ENCODE measurements at regions of chr7 and their contacts with region 1.

Region 1: DNA sequence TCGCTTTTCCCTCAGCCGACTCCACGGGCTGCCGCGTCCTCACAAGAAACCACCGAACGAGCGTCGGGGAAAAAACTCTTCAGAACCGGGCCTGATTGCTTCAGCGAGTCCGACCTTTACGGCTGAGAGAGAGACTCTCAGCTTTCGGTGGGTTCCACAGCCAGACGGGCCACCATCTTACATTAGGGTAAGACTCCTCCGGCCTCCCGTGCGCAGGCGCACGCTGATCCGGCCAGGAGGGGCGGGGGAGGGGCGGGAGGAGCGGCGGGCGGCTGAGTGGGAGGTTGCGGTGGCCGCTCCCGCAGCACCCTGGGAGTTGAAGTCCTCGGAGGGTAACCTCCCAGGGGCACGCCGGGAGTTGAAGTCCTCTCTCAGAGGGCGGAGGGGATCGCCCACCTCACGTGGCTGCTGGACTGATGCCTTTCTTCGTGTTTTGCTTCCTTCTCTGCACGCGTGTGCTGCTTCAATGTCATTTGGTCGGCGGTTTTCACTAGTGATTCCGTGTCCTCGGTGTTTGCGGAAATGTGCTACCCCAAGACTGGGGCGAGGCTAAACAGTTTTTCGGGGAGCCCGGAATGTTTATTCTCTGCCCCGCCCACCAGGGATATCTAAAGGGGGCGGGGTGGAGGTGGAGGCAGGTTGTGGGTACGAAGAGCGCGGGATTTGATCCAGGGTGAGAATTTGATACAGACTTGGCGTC is at the start of gene CNOT4:
- DNase-seq: peak; percentile 96 to 98 (median 97)
- ATAC-seq: peak; percentile 98 to 100 (median 99)
- H3K4me3 ChIP-seq: peak within 1 kb of the TSS; percentile 49 to 92 (median 77)
- H3K27ac ChIP-seq: peak within 1 kb of the TSS; percentile 35 to 97 (median 92)
- H3K4me1 ChIP-seq: peaks cover 6 to 40% (median 25%) of the 10 kb centered on the region in 12 donors
- H3K27me3 ChIP-seq: no peaks in the 10 kb centered on the region
- CTCF ChIP-seq: no peak
- POLR2A ChIP-seq: peak in 1 of 2 donors; percentile 57
- total RNA-seq, gene CNOT4: 21.2 to 29.2 (median 24.0) TPM

Region 2: GRCh38 chr7:134710859-134711624 is 799.0 kb before region 1 on chr7:
- intact Hi-C with region 1: no loop called
- DNase-seq: no peak
- ATAC-seq: no peak
- H3K4me3 ChIP-seq: no peak overlapping the region
- H3K27ac ChIP-seq: peak overlapping the region in 1 of 12 donors; percentile 26
- H3K4me1 ChIP-seq: peaks cover 0 to 5% (median 0%) of the 10 kb centered on the region in 12 donors
- H3K27me3 ChIP-seq: no peaks in the 10 kb centered on the region
- CTCF ChIP-seq: no peak
- POLR2A ChIP-seq: no peak

Region 3: GRCh38 chr7:134891262-134891695 is 618.8 kb before region 1 on chr7:
- intact Hi-C with region 1: no loop called
- DNase-seq: peak; percentile 88 to 92 (median 88)
- ATAC-seq: peak; percentile 88 to 93 (median 91)
- H3K4me3 ChIP-seq: peak overlapping the region; percentile 41 to 70 (median 60)
- H3K27ac ChIP-seq: peak overlapping the region; percentile 69 to 94 (median 84)
- H3K4me1 ChIP-seq: peaks cover 8 to 71% (median 46%) of the 10 kb centered on the region in 12 donors
- H3K27me3 ChIP-seq: no peaks in the 10 kb centered on the region
- CTCF ChIP-seq: no peak
- POLR2A ChIP-seq: peak in 1 of 2 donors; percentile 36

Region 4: GRCh38 chr7:135414850-135415439 is 95.1 kb before region 1 on chr7:
- intact Hi-C with region 1: loop called in 1 of 10 experiments (anchors 10 kb)
- DNase-seq: peak in 1 of 5 donors; percentile 22
- ATAC-seq: no peak
- H3K4me3 ChIP-seq: no peak overlapping the region
- H3K27ac ChIP-seq: no peak overlapping the region
- H3K4me1 ChIP-seq: no peaks in the 10 kb centered on the region
- H3K27me3 ChIP-seq: no peaks in the 10 kb centered on the region
- CTCF ChIP-seq: peak in 9 of 12 donors; percentile 10 to 46 (median 40)
- POLR2A ChIP-seq: no peak

Region 5: DNA sequence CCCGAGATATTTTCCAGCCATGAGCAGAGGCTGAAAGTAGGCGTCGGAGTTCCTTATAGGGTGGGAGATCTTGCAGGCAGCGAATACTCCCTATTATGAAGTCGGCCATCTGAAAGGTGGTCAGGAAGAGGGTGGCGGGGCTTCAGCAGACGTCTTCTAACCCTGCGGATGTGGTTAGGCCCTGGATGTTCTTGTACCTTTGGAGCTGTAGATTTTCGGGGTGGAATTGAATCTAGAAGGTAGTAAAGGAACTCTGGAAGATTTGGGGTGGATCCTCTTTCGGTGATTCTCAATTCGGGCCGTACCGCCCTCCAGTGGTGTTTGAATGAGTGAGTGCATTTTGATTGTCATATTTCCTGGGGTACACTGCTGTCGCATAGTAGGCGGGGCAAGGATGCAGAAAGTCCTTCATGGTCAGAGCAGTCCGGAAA is 48.3 kb after region 1 on chr7:
- intact Hi-C with region 1: loop called (anchors 2 to 5 kb)
- DNase-seq: peak in 4 of 5 donors; percentile 33 to 58 (median 41)
- ATAC-seq: peak; percentile 52 to 78 (median 71)
- H3K4me3 ChIP-seq: peak overlapping the region; percentile 67 to 98 (median 88)
- H3K27ac ChIP-seq: peak overlapping the region; percentile 92 to 100 (median 96)
- H3K4me1 ChIP-seq: peaks cover 0 to 33% (median 9%) of the 10 kb centered on the region in 12 donors
- H3K27me3 ChIP-seq: no peaks in the 10 kb centered on the region
- CTCF ChIP-seq: peak; percentile 13 to 68 (median 54)
- POLR2A ChIP-seq: no peak

Region 6: GRCh38 chr7:135645296-135645904 is 135.3 kb after region 1 on chr7:
- intact Hi-C with region 1: loop called in 1 of 10 experiments (anchors 10 kb)
- DNase-seq: no peak
- ATAC-seq: peak in 3 of 4 donors; percentile 51 to 70 (median 62)
- H3K4me3 ChIP-seq: no peak overlapping the region
- H3K27ac ChIP-seq: no peak overlapping the region
- H3K4me1 ChIP-seq: peaks cover 0 to 2% (median 0%) of the 10 kb centered on the region in 12 donors
- H3K27me3 ChIP-seq: no peaks in the 10 kb centered on the region
- CTCF ChIP-seq: peak; percentile 56 to 79 (median 70)
- POLR2A ChIP-seq: no peak